GM12878 (cell line): ENCODE measurements at regions of chr2 and their contacts with region 1.

Region 1: GRCh38 chr2:161166538-161167409 is 6.5 kb downstream of the TANK start:
- DNase-seq: peak; percentile 95
- ATAC-seq: peak; percentile 77
- H3K4me3 ChIP-seq: peak overlapping the region; percentile 35; the same call in 1 of the 2 replicates
- H3K27ac ChIP-seq: peak overlapping the region; percentile 89
- H3K4me1 ChIP-seq: peaks cover 56% of the 10 kb centered on the region
- H3K27me3 ChIP-seq: no peaks in the 10 kb centered on the region
- CTCF ChIP-seq: no peak
- EP300 ChIP-seq: peak; percentile 91 to 96
- POLR2A ChIP-seq: no peak
- RAD21 ChIP-seq: no peak

Region 2: DNA sequence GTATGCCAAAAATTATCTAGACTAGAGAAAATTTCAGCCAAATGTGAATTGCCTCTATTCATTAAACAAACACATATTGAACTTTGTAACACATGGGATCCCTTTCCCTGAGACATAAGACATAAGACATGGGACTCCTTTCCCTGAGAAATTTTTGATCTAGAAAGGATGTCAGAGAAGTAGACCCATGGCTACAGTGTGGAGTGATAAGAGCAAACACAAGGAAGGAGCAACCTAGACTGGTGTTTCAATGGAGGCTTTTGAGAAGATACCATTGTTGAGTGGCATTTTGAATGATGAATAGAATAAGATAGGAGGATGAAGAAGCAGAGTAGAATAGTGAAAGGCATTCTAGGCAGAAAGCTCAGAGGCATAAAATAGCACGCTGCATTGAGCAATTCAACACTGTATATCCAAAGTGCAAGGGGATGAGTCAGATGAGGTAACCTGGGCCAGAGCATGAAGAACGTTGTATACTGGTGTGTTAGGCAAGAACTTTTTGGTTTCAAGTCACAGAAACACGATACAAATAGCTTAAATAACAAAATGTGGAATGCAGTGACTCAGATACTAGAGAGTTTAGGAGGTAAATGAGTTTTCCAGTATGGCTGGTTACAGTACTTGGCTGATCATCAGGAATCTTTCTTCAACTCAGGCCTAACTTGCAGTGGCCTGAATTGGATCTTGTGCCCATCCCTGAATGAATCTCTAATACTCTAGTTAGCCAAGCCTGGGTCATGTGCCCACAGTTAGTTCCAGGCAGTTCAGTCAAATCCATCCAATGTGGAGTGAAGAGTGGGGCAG is 136.3 kb before region 1 on chr2:
- CTCF ChIA-PET with region 1: no interaction called
- POLR2A ChIA-PET with region 1: no interaction called
- RAD21 ChIA-PET with region 1: no interaction called
- SMC1A ChIA-PET with region 1: no interaction called
- in situ Hi-C with region 1: no loop called
- intact Hi-C with region 1: no loop called
- DNase-seq: no peak
- ATAC-seq: no peak
- H3K4me3 ChIP-seq: no peak overlapping the region
- H3K27ac ChIP-seq: no peak overlapping the region
- H3K4me1 ChIP-seq: no peaks in the 10 kb centered on the region
- H3K27me3 ChIP-seq: no peaks in the 10 kb centered on the region
- CTCF ChIP-seq: no peak
- EP300 ChIP-seq: no peak
- POLR2A ChIP-seq: no peak
- RAD21 ChIP-seq: no peak

Region 3: DNA sequence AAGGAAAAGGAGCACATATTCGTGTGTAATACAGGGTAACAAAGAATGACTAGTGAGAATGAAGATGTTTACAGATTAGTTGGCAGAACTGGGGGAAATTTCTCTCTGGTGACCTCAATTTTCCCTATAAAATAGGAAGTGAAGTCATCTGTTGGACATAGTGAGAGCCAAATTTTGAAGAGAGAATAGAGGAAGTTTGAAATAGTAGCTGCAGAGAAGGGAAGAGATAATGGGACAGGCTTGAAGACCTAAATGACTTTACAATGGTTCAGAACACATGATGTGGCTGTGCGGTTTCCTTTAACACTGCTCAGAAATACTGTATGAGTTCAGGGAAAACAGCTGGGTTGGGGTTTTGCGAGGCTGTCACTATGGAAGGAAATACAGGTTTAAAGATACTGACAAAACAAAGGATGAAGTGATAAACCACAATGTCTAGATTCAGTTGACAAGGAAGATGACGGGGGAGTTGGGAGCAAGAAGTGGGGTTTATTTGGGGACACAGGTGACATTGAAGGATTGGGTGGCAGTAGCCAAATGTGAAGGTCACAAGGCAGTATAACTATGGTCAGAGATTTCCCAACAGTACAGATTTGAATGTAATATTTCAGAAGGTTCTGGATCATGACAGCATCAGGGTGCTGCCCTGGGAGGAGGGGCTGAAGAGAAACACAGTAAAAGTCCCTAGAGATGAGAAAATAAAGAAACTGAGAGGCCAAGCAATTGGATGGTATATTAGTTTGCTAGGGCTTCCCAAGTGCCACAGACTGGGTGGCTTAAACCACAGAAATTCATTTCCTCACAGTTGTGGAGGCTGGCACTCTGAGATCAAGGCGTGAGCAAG is 89.2 kb before region 1 on chr2:
- CTCF ChIA-PET with region 1: no interaction called
- POLR2A ChIA-PET with region 1: no interaction called
- RAD21 ChIA-PET with region 1: no interaction called
- SMC1A ChIA-PET with region 1: interaction called, 5 read pairs
- in situ Hi-C with region 1: no loop called
- intact Hi-C with region 1: loop called (anchors 1 kb)
- DNase-seq: peak; percentile 81
- ATAC-seq: peak; percentile 90
- H3K4me3 ChIP-seq: no peak overlapping the region
- H3K27ac ChIP-seq: peak overlapping the region; percentile 71
- H3K4me1 ChIP-seq: peaks cover 20% of the 10 kb centered on the region
- H3K27me3 ChIP-seq: no peaks in the 10 kb centered on the region
- CTCF ChIP-seq: no peak
- EP300 ChIP-seq: peak; percentile 70 to 74
- POLR2A ChIP-seq: no peak
- RAD21 ChIP-seq: 0 out of 2 replicates have a peak, but pooled peaks have one; percentile 5

Region 4: DNA sequence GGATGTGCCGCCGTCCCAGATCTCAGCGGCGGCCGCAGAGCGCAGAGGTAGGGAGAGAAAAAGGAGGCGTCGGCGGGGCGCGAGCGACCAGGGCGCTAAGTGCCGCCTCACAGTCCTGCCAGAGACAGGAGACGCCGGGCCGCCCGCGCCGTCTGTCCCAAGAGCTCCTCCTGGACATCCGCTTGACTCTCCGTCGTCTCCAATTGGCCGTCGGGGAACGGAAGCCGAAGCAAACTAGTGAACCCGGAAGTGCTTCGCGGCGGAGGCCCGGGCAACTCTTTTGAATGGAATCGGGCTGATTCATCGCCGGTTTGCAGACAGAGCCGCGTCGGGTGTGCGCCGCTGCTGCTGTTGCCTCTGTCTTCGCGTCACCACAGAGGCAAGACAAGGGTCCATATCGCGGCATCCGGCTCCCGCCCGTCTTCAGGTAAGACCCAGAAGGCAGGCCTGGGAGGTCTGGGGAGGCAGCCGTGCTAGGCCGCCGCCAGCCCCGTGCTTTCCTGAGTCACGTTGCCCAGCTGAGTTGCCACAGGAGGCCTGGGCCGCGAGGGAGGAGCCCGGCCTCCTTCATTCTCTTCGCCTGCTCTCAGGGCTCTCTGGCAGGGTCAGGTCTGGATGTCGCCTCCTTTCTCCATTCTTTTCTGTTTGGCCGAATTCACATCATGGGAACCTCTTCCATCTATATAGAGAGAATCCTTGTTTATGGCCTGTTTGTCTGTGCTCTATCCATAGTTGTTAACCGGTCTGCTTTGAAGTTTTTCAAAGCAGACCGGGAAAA is 141.6 kb after region 1 on chr2 and contains the start of gene PSMD14:
- CTCF ChIA-PET with region 1: no interaction called
- POLR2A ChIA-PET with region 1: no interaction called
- RAD21 ChIA-PET with region 1: no interaction called
- SMC1A ChIA-PET with region 1: no interaction called
- in situ Hi-C with region 1: no loop called
- intact Hi-C with region 1: loop called (anchors 5 kb)
- DNase-seq: peak; percentile 63
- ATAC-seq: peak; percentile 95
- H3K4me3 ChIP-seq: peak within 1 kb of the TSS; percentile 86
- H3K27ac ChIP-seq: peak within 1 kb of the TSS; percentile 92
- H3K4me1 ChIP-seq: no peaks in the 10 kb centered on the region; the same call in 1 of the 2 replicates
- H3K27me3 ChIP-seq: no peaks in the 10 kb centered on the region
- CTCF ChIP-seq: no peak
- EP300 ChIP-seq: no peak
- POLR2A ChIP-seq: peak; percentile 95
- RAD21 ChIP-seq: no peak
- polyA plus RNA-seq, gene PSMD14: 225 to 253 TPM